ENCODE measurements at regions of chr22 and their contacts with region 1.

Region 1: GRCh38 chr22:50498322-50498890 is 9.1 kb downstream of the LMF2 start:
- DNase-seq: no peak
- ATAC-seq: peak; percentile 47 to 51
- H3K4me3 ChIP-seq: no peak overlapping the region
- H3K27ac ChIP-seq: no peak overlapping the region
- H3K4me1 ChIP-seq: no peaks in the 10 kb centered on the region
- H3K27me3 ChIP-seq: no peaks in the 10 kb centered on the region
- CTCF ChIP-seq: peak in 3 of 5 experiments; percentile 27 to 49 (median 36)
- POLR2A ChIP-seq: no peak

Region 2: DNA sequence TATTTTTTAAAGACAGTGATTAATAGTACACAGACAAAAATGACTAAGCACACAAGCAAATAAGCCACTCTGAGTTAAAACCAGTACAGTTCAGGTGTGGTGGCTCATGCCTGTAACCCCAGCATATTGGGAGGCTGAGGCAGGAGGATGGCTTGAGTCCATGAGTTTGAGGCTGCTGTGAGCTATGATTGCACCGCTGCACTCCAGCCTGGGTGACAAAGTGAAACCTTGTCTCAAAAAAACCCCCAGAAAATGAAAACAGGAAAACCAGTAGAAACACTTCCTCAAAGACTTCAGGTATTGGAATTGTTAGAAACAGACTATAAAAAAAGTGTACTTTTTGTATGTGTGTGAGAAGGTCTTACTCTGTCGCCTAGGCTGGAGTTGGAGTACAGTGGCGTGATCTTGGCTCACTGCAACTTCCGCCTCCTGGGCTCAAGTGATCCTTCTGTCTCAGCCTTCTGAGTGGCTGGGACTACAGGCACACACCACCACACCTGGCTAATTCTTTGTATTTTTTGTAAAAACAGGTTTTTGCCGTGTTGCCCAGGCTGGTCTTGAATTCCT is 122.2 kb before region 1 on chr22:
- in situ Hi-C with region 1: loop called in 1 of 4 experiments (anchors 10 kb)
- intact Hi-C with region 1: no loop called
- DNase-seq: no peak
- ATAC-seq: no peak
- H3K4me3 ChIP-seq: no peak overlapping the region
- H3K27ac ChIP-seq: no peak overlapping the region
- H3K4me1 ChIP-seq: no peaks in the 10 kb centered on the region
- H3K27me3 ChIP-seq: no peaks in the 10 kb centered on the region
- CTCF ChIP-seq: no peak
- POLR2A ChIP-seq: no peak

Region 3: GRCh38 chr22:50551160-50551752 is 52.9 kb after region 1 on chr22:
- in situ Hi-C with region 1: no loop called
- intact Hi-C with region 1: no loop called
- DNase-seq: no peak
- ATAC-seq: no peak
- H3K4me3 ChIP-seq: no peak overlapping the region
- H3K27ac ChIP-seq: no peak overlapping the region
- H3K4me1 ChIP-seq: peaks cover 5 to 9% of the 10 kb centered on the region in 2 donors
- H3K27me3 ChIP-seq: peaks cover 28 to 33% (median 31%) of the 10 kb centered on the region in 3 donors
- CTCF ChIP-seq: no peak
- POLR2A ChIP-seq: no peak

Measured in gastrocnemius medialis (tissue), 4 donors.